BJ (cell line): ENCODE measurements at regions of chr3 and their contacts with region 1.

Region 1: GRCh38 chr3:194592798-194593752 is 40.1 kb downstream of the TMEM44 start:
- DNase-seq: peak; percentile 99
- H3K4me3 ChIP-seq: no peak overlapping the region
- H3K27me3 ChIP-seq: no peaks in the 10 kb centered on the region
- CTCF ChIP-seq: no peak

Region 2: GRCh38 chr3:194573691-194574437 is 19.2 kb before region 1 on chr3:
- CTCF ChIA-PET with region 1: interaction called, 13 read pairs
- POLR2A ChIA-PET with region 1: no interaction called
- DNase-seq: no peak
- H3K4me3 ChIP-seq: no peak overlapping the region
- H3K27me3 ChIP-seq: no peaks in the 10 kb centered on the region
- CTCF ChIP-seq: peak; percentile 47